Endothelial cell of umbilical vein (primary cell): ENCODE measurements at regions of chr1 and their contacts with region 1.

Region 1: DNA sequence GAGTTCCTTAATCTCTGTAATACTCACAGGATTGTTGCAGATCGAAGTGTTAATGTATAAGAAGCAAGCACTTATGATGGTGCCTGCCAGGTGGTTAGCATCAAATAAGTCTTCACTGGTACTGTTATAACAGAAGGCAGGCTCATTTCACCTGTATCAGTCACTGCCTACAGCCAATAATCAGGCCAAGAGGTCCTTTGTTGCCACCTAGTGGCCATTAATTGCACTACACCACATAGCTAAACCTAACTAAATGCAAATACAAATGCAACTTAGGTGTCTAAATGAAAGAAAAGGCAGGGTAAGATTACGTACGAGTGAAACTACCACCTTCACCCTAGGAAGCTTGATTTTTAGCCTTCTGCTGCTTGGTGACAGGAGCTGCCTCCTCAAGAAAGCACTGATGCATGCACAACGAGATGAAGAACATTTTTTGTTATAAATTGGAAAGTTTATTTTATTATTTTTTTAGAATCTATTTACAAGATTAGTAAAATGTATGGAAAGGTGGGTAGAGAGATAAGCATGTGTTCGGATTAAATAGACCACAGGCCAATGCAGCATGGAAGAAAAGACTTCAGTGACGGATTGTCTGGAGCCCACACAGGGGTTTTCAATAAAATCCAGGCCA is 334.8 kb upstream of the CAMK1G start:
- DNase-seq: peak; percentile 74
- H3K4me3 ChIP-seq: no peak overlapping the region
- H3K27ac ChIP-seq: no peak overlapping the region
- H3K4me1 ChIP-seq: no peaks in the 10 kb centered on the region
- H3K27me3 ChIP-seq: peaks cover 0 to 2% of the 10 kb centered on the region in 2 experiments
- CTCF ChIP-seq: peak; percentile 67 to 76
- POLR2A ChIP-seq: no peak

Region 2: DNA sequence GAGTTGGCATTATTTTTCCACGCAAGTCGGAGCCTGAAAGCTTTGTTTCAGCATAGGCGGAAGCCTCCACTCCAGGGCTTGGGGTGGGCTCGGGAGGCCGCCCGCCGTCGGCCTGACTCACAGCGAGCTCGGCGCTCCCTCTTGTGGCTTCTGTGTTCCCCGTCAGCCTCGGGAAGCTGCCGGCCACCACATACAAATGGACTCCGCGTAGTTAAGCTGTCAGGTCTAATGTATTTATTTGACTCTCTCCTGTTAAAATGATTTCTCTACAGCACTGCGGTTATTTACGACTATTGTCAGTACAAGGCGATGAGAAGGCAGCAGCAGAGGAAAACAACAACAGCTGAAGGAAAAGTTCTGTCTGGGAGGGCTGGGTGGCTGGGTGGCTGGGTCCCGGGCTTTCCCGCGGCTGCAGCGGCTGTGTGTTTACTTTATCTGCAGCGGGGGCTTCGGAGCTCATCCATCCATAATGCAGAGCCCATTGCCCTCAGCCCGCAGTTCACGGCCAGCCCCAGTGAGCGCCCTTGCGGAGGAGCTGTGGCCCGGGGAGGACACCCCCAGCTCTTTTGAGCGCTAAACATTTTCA is 41.0 kb before region 1 on chr1:
- CTCF ChIA-PET with region 1: interaction called, 69 read pairs
- POLR2A ChIA-PET with region 1: no interaction called
- dilution Hi-C with region 1: no loop called
- intact Hi-C with region 1: loop called (anchors 2 kb)
- DNase-seq: peak; percentile 73
- H3K4me3 ChIP-seq: no peak overlapping the region
- H3K27ac ChIP-seq: no peak overlapping the region
- H3K4me1 ChIP-seq: no peaks in the 10 kb centered on the region
- H3K27me3 ChIP-seq: peaks cover 16 to 23% of the 10 kb centered on the region in 2 experiments
- CTCF ChIP-seq: peak; percentile 77 to 87
- POLR2A ChIP-seq: no peak

Region 3: DNA sequence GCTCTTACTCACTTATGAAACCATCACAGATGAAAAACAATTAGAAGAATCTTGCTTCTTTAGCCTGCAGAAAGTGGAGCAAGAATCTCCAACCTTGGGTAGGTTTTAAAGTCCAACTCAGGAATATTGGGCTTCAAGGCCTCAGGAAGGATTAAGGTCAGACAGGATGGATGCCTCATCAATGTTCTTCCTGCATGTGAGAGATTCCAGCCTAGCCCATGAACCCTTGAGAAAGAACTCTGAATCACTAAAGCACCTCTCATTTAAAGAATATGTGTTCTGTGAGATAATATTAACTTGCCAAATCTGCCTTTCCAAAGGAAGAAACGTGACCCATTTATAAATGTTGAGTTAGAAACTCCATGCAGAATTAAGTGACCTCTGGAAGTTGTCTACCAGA is 10.4 kb before region 1 on chr1:
- CTCF ChIA-PET with region 1: interaction called, 18 read pairs
- POLR2A ChIA-PET with region 1: no interaction called
- dilution Hi-C with region 1: no loop called
- intact Hi-C with region 1: no loop called
- DNase-seq: peak; percentile 14
- H3K4me3 ChIP-seq: no peak overlapping the region
- H3K27ac ChIP-seq: no peak overlapping the region
- H3K4me1 ChIP-seq: peaks cover 3% of the 10 kb centered on the region
- H3K27me3 ChIP-seq: no peaks in the 10 kb centered on the region
- CTCF ChIP-seq: no peak
- POLR2A ChIP-seq: no peak

Region 4: GRCh38 chr1:209260136-209260535 is 11.4 kb after region 1 on chr1:
- CTCF ChIA-PET with region 1: interaction called, 25 read pairs
- POLR2A ChIA-PET with region 1: no interaction called
- dilution Hi-C with region 1: no loop called
- intact Hi-C with region 1: no loop called
- DNase-seq: no peak
- H3K4me3 ChIP-seq: no peak overlapping the region
- H3K27ac ChIP-seq: no peak overlapping the region
- H3K4me1 ChIP-seq: no peaks in the 10 kb centered on the region
- H3K27me3 ChIP-seq: no peaks in the 10 kb centered on the region
- CTCF ChIP-seq: no peak
- POLR2A ChIP-seq: no peak

Region 5: DNA sequence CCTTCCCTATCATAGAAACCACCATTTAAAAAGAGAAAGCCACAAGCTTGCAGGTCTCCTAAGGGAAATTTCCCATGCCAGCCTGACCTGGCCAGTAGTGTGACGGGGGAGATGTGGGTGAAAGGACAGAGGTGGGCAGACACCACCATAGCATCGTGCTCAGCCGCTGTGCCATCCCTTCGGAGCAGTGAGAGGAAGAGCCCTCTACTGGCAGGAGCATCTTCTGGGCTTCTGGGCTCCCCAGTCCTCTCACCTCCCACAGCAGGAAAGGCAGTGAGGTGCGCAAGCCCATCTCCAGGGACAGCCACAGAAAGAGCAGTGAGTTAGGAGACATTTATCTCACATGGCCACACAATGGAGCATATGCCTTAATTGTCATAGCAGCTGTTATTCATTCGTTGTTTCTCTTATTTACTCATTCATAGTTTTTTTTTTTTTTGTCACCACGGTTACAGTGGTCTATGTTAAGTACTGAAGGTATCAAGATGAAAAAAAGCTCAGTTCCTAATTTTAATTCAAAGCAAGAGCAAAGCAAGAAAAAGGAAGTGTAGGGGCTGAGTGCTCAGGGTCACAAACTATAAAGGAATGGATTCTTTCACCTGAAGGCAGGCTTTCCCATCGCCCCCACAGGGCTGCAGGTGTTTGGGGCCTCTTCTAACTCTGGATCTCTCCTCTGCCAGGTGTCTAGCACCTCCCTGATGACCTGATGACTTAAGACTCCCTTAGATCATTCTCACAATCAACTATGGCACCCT is 285.9 kb after region 1 on chr1:
- CTCF ChIA-PET with region 1: no interaction called
- POLR2A ChIA-PET with region 1: no interaction called
- dilution Hi-C with region 1: no loop called
- intact Hi-C with region 1: no loop called
- DNase-seq: no peak
- H3K4me3 ChIP-seq: no peak overlapping the region
- H3K27ac ChIP-seq: no peak overlapping the region
- H3K4me1 ChIP-seq: no peaks in the 10 kb centered on the region
- H3K27me3 ChIP-seq: no peaks in the 10 kb centered on the region
- CTCF ChIP-seq: no peak
- POLR2A ChIP-seq: no peak